ENCODE measurements at regions of chr4 and their contacts with region 1.

Region 1: DNA sequence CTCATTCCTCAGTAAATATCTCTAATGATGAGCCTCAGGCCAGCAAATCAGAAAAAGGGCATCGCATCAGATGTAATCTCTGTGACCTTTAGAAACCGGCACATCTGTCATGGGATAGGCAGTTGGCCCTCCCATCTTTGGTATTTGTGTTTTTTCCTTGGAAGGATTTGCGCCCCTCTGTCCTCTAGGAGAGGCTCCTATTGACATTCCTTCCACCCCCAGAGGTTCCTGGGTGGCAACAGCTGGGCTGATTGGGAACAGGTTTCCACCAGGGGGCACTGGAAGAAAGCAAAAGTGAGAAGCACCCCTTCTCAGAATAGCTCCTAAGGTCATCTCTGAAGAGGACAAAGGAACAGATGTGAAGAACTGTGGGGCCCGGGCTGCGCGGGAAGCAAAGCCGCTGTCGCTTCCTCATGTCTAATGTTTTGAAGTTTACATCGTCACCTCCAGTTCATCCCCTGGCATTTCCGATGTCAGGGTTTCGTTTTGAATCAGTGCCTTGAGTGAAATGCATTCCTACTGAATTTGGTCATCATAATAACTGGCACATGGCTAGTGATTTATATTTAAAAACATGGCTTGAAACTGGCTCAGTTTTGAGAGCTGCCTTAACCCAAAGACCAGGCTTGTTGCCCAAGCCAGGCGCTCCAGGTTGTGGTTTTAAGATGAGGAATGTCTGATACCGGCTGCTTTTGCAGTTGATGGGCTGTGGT is 6.2 kb downstream of the TXK start:
- DNase-seq: peak; percentile 72
- ATAC-seq: peak; percentile 88
- H3K4me3 ChIP-seq: peak overlapping the region in 1 of 2 experiments; percentile 32; a peak in 3 of 4 replicates
- H3K27ac ChIP-seq: peak overlapping the region; percentile 38; the same call in 1 of the 2 replicates
- H3K4me1 ChIP-seq: peaks cover 32 to 38% of the 10 kb centered on the region in 2 experiments
- H3K27me3 ChIP-seq: no peaks in the 10 kb centered on the region
- CTCF ChIP-seq: peak; percentile 72 to 84 (median 80)
- POLR2A ChIP-seq: no peak
- RAD21 ChIP-seq: peak; percentile 85

Region 2: GRCh38 chr4:48275247-48275646 is 147.4 kb after region 1 on chr4:
- CTCF ChIA-PET with region 1: interaction called, 10 read pairs
- POLR2A ChIA-PET with region 1: interaction called, 3 read pairs
- RAD21 ChIA-PET with region 1: no interaction called
- intact Hi-C with region 1: loop called (anchors 1 kb)
- DNase-seq: peak; percentile 38
- ATAC-seq: peak; percentile 87
- H3K4me3 ChIP-seq: no peak overlapping the region
- H3K27ac ChIP-seq: no peak overlapping the region
- H3K4me1 ChIP-seq: peaks cover 0 to 10% of the 10 kb centered on the region in 2 experiments; a peak in 3 of 4 replicates
- H3K27me3 ChIP-seq: no peaks in the 10 kb centered on the region
- CTCF ChIP-seq: peak; percentile 54 to 89 (median 86); a peak in 5 of 6 replicates
- POLR2A ChIP-seq: no peak
- RAD21 ChIP-seq: peak; percentile 62

Region 3: GRCh38 chr4:48290146-48290772 is 162.4 kb after region 1 on chr4:
- CTCF ChIA-PET with region 1: interaction called, 7 read pairs
- POLR2A ChIA-PET with region 1: no interaction called
- RAD21 ChIA-PET with region 1: interaction called in 1 of 2 experiments, 6 read pairs
- intact Hi-C with region 1: loop called (anchors 1 kb)
- DNase-seq: peak; percentile 36
- ATAC-seq: peak; percentile 92
- H3K4me3 ChIP-seq: no peak overlapping the region
- H3K27ac ChIP-seq: no peak overlapping the region
- H3K4me1 ChIP-seq: peaks cover 0 to 4% of the 10 kb centered on the region in 2 experiments; a peak in 2 of 4 replicates
- H3K27me3 ChIP-seq: no peaks in the 10 kb centered on the region
- CTCF ChIP-seq: peak; percentile 49 to 84 (median 84); a peak in 5 of 6 replicates
- POLR2A ChIP-seq: no peak
- RAD21 ChIP-seq: peak; percentile 63

Measured in HCT116 (cell line).